Tibial artery (tissue), 4 donors: ENCODE measurements at regions of chr15 and their contacts with region 1.

Region 1: GRCh38 chr15:57527382-57528091 is 64.2 kb upstream of the MYZAP start:
- DNase-seq: peak in 1 of 2 donors; percentile 50
- H3K4me3 ChIP-seq: no peak overlapping the region
- H3K27ac ChIP-seq: no peak overlapping the region
- H3K4me1 ChIP-seq: no peaks in the 10 kb centered on the region
- H3K27me3 ChIP-seq: no peaks in the 10 kb centered on the region
- CTCF ChIP-seq: peak; percentile 63 to 76

Region 2: DNA sequence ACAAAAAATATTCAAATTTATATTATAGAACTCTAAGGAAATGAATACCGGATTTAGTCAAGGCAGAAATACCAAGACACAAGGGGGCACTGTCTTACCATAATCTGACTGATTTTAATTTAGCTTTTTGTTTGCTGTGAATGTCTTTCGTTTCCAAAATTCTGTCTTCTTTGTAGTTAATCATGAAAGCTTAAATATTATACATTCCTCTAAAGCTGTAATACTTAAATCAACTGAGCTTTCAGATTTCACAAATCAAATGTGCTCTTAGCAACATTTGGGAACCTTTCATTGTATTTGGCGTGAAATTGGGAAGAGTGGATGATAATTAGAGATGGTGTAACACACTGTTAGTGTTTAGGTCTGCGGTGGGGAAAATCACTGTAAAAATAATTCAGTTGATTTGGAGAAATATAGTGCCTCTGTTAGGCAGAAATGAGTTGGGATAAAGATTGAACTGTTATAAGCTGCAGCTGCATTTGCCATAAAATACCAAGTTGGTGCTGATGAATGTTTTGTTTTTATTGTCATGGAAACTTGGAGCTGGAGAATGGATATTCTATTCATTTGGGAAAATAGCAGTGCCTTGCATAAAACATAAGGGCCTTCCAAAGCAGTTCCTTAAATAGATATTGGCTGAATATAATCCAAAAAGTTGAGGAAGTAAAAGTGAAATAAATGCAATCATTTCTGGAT is 380.9 kb before region 1 on chr15:
- intact Hi-C with region 1: loop called (anchors 5 kb)
- DNase-seq: no peak
- H3K4me3 ChIP-seq: peak overlapping the region; percentile 16 to 26
- H3K27ac ChIP-seq: peak overlapping the region in 1 of 2 donors; percentile 48
- H3K4me1 ChIP-seq: peaks cover 0 to 46% (median 28%) of the 10 kb centered on the region in 4 donors
- H3K27me3 ChIP-seq: no peaks in the 10 kb centered on the region
- CTCF ChIP-seq: peak; percentile 59 to 69

Region 3: GRCh38 chr15:57251941-57252340 is 275.6 kb before region 1 on chr15:
- intact Hi-C with region 1: no loop called
- DNase-seq: no peak
- H3K4me3 ChIP-seq: no peak overlapping the region
- H3K27ac ChIP-seq: no peak overlapping the region
- H3K4me1 ChIP-seq: no peaks in the 10 kb centered on the region
- H3K27me3 ChIP-seq: no peaks in the 10 kb centered on the region
- CTCF ChIP-seq: no peak

Region 4: DNA sequence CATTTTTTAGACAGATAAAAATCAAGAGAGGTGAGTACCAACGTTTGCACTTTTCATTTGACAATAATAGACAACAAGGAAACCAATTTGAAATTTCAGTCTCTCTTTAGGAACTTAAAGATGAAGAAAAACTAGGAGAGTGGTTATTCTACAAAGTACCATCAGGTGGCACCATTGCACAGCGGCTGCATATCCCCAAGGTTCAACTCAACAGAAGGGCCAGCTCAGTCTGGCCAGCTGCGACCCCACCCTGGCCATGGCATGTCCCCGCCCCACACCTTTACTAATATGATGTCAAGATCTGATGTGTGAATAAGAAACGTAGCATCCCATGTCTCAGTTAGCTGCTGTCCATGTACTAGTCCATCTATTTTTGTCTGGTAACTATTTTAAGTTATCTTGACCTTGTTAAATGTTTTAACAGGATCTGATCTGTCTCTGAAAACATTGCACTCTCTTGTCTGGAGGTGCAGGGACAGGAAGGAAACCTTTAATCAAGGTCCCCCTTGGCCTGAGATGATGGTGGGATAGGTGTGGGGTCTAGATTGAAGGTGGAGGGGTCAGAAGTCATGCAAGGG is 186.8 kb before region 1 on chr15:
- intact Hi-C with region 1: loop called (anchors 5 kb)
- DNase-seq: peak in 1 of 2 donors; percentile 41
- H3K4me3 ChIP-seq: no peak overlapping the region
- H3K27ac ChIP-seq: no peak overlapping the region
- H3K4me1 ChIP-seq: peaks cover 0 to 11% (median 0%) of the 10 kb centered on the region in 4 donors
- H3K27me3 ChIP-seq: peaks cover 0 to 4% of the 10 kb centered on the region in 2 donors
- CTCF ChIP-seq: peak; percentile 84 to 93

Region 5: GRCh38 chr15:57866149-57866736 is 338.7 kb after region 1 on chr15:
- intact Hi-C with region 1: no loop called
- DNase-seq: peak in 1 of 2 donors; percentile 55
- H3K4me3 ChIP-seq: no peak overlapping the region
- H3K27ac ChIP-seq: no peak overlapping the region
- H3K4me1 ChIP-seq: no peaks in the 10 kb centered on the region
- H3K27me3 ChIP-seq: peaks cover 0 to 9% of the 10 kb centered on the region in 2 donors
- CTCF ChIP-seq: peak; percentile 48 to 60